ENCODE measurements at regions of chr1 and their contacts with region 1.

Region 1: GRCh38 chr1:86419277-86419903 is 4.6 kb upstream of the CLCA2 start:
- DNase-seq: peak; percentile 8 to 71 (median 48)
- ATAC-seq: peak; percentile 96
- H3K4me3 ChIP-seq: no peak overlapping the region
- H3K4me3 Mint-ChIP-seq: peak overlapping the region; percentile 64
- H3K27ac ChIP-seq: no peak overlapping the region
- H3K27ac Mint-ChIP-seq: peak overlapping the region; percentile 61
- H3K4me1 ChIP-seq: peaks cover 3% of the 10 kb centered on the region
- H3K4me1 Mint-ChIP-seq: peaks cover 5% of the 10 kb centered on the region
- H3K27me3 ChIP-seq: no peaks in the 10 kb centered on the region
- H3K27me3 Mint-ChIP-seq: peaks cover 3% of the 10 kb centered on the region
- CTCF ChIP-seq: peak; percentile 71

Region 2: DNA sequence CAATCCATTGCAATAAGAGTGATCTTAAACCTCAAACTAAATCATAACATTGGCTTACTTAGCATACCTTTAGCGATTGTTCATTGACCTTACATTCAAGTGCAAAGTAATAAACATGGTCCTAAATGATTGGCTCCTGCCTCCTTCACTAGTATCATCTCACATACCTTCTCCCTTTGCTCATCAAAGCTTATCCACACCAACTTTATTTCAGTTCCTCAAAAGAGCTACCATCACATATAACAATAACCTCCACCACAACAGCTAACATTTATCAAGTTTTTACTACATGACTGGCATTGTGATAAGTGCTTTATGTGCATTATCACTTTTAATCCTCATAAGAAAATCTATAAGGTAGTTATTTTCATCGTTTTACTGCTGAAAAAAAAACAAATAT is 461.6 kb before region 1 on chr1:
- CTCF ChIA-PET with region 1: no interaction called
- POLR2A ChIA-PET with region 1: no interaction called
- intact Hi-C with region 1: no loop called
- DNase-seq: no peak
- ATAC-seq: no peak
- H3K4me3 ChIP-seq: no peak overlapping the region
- H3K4me3 Mint-ChIP-seq: no peak overlapping the region
- H3K27ac ChIP-seq: no peak overlapping the region
- H3K27ac Mint-ChIP-seq: no peak overlapping the region
- H3K4me1 ChIP-seq: no peaks in the 10 kb centered on the region
- H3K4me1 Mint-ChIP-seq: no peaks in the 10 kb centered on the region
- H3K27me3 ChIP-seq: no peaks in the 10 kb centered on the region
- H3K27me3 Mint-ChIP-seq: no peaks in the 10 kb centered on the region
- CTCF ChIP-seq: no peak

Region 3: DNA sequence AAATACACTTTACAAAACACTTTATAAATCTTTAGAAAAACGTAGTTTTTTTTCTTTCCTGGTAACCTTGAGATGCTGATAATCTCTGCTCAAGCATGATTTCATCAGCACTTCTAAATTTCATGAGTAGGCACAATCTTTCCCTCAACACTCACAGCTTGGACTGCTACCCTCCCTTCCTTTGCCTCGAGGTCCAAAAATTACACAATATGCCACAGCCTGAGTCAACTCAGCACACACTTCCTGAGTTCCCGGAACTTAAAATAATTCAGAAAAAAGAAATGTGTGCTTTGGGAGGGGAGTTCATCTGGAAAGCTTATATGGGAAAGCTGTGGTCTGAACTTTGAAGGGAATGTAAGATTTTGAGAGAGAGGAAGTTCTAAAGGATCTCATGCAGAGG is 10.4 kb after region 1 on chr1:
- CTCF ChIA-PET with region 1: interaction called, 11 read pairs
- POLR2A ChIA-PET with region 1: no interaction called
- intact Hi-C with region 1: no loop called
- DNase-seq: peak in 1 of 9 experiments; percentile 20
- ATAC-seq: no peak
- H3K4me3 ChIP-seq: no peak overlapping the region
- H3K4me3 Mint-ChIP-seq: no peak overlapping the region
- H3K27ac ChIP-seq: no peak overlapping the region
- H3K27ac Mint-ChIP-seq: no peak overlapping the region
- H3K4me1 ChIP-seq: peaks cover 7% of the 10 kb centered on the region
- H3K4me1 Mint-ChIP-seq: no peaks in the 10 kb centered on the region
- H3K27me3 ChIP-seq: peaks cover 0 to 2% of the 10 kb centered on the region in 2 experiments
- H3K27me3 Mint-ChIP-seq: peaks cover 7% of the 10 kb centered on the region
- CTCF ChIP-seq: no peak

Region 4: GRCh38 chr1:86441581-86441980 is 22.2 kb after region 1 on chr1:
- CTCF ChIA-PET with region 1: no interaction called
- POLR2A ChIA-PET with region 1: no interaction called
- intact Hi-C with region 1: loop called in 1 of 2 experiments (anchors 2 kb)
- DNase-seq: peak in 5 of 9 experiments; percentile 48 to 67 (median 60)
- ATAC-seq: peak; percentile 88
- H3K4me3 ChIP-seq: no peak overlapping the region
- H3K4me3 Mint-ChIP-seq: no peak overlapping the region
- H3K27ac ChIP-seq: no peak overlapping the region
- H3K27ac Mint-ChIP-seq: no peak overlapping the region
- H3K4me1 ChIP-seq: peaks cover 6% of the 10 kb centered on the region
- H3K4me1 Mint-ChIP-seq: peaks cover 10% of the 10 kb centered on the region
- H3K27me3 ChIP-seq: no peaks in the 10 kb centered on the region
- H3K27me3 Mint-ChIP-seq: peaks cover 6% of the 10 kb centered on the region
- CTCF ChIP-seq: no peak

Region 5: DNA sequence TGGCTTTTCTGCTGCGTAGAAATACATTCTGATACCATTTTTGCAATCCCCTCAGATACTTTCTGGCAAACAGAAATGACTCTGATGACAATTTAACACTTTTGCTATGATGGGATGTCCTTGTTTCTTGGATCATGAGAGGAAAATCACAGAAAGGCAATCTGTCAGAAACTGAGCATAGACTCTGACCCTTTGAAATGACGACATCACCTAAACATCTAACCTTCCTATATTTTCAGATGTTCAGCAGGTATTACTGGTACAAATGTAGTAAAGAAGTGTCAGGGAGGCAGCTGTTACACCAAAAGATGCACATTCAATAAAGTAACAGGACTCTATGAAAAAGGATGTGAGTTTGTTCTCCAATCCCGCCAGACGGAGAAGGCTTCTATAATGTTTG is 62.6 kb after region 1 on chr1:
- CTCF ChIA-PET with region 1: no interaction called
- POLR2A ChIA-PET with region 1: no interaction called
- intact Hi-C with region 1: no loop called
- DNase-seq: no peak
- ATAC-seq: no peak
- H3K4me3 ChIP-seq: no peak overlapping the region
- H3K4me3 Mint-ChIP-seq: no peak overlapping the region
- H3K27ac ChIP-seq: no peak overlapping the region
- H3K27ac Mint-ChIP-seq: no peak overlapping the region
- H3K4me1 ChIP-seq: no peaks in the 10 kb centered on the region
- H3K4me1 Mint-ChIP-seq: no peaks in the 10 kb centered on the region
- H3K27me3 ChIP-seq: no peaks in the 10 kb centered on the region
- H3K27me3 Mint-ChIP-seq: no peaks in the 10 kb centered on the region
- CTCF ChIP-seq: no peak

Region 6: GRCh38 chr1:86741947-86742572 is 322.7 kb after region 1 on chr1:
- CTCF ChIA-PET with region 1: no interaction called
- POLR2A ChIA-PET with region 1: no interaction called
- intact Hi-C with region 1: loop called in 1 of 2 experiments (anchors 5 kb)
- DNase-seq: peak in 6 of 9 experiments; percentile 11 to 71 (median 48)
- ATAC-seq: no peak
- H3K4me3 ChIP-seq: no peak overlapping the region
- H3K4me3 Mint-ChIP-seq: no peak overlapping the region
- H3K27ac ChIP-seq: no peak overlapping the region
- H3K27ac Mint-ChIP-seq: no peak overlapping the region
- H3K4me1 ChIP-seq: peaks cover 20% of the 10 kb centered on the region
- H3K4me1 Mint-ChIP-seq: peaks cover 4% of the 10 kb centered on the region
- H3K27me3 ChIP-seq: no peaks in the 10 kb centered on the region
- H3K27me3 Mint-ChIP-seq: no peaks in the 10 kb centered on the region
- CTCF ChIP-seq: peak; percentile 83

Region 7: GRCh38 chr1:86991549-86992186 is 572.3 kb after region 1 on chr1:
- CTCF ChIA-PET with region 1: no interaction called
- POLR2A ChIA-PET with region 1: no interaction called
- intact Hi-C with region 1: no loop called
- DNase-seq: no peak
- ATAC-seq: no peak
- H3K4me3 ChIP-seq: no peak overlapping the region
- H3K4me3 Mint-ChIP-seq: no peak overlapping the region
- H3K27ac ChIP-seq: no peak overlapping the region
- H3K27ac Mint-ChIP-seq: no peak overlapping the region
- H3K4me1 ChIP-seq: no peaks in the 10 kb centered on the region
- H3K4me1 Mint-ChIP-seq: peaks cover 6% of the 10 kb centered on the region
- H3K27me3 ChIP-seq: no peaks in the 10 kb centered on the region
- H3K27me3 Mint-ChIP-seq: no peaks in the 10 kb centered on the region
- CTCF ChIP-seq: no peak

Measured in CD8-positive, alpha-beta T cell (primary cell).